ENCODE measurements at regions of chr9 and their contacts with region 1.

Region 1: DNA sequence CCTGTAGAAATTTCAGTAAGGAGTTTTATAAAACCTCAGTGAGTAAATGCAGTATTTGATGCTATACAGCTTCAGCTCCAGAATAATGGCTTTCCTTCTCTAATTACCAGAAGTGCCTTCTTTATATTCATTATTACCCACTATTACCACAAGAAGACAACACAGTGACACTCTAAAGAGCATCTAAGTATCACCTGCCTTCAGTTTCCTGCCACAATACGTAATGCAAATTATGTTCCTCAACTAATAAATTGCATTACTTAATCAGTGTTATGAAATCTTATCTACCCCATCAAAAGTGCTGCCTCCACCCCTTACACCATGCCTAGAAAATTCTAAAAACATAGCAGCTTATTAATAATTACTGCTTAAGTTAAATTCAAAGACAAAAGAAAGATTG is 91.9 kb downstream of the TRPM6 start:
- DNase-seq: no peak
- ATAC-seq: no peak

Region 2: GRCh38 chr9:73441890-73442818 is 1353.6 kb before region 1 on chr9:
- intact Hi-C with region 1: no loop called
- DNase-seq: no peak
- ATAC-seq: no peak

Region 3: GRCh38 chr9:74753650-74754049 is 42.2 kb before region 1 on chr9:
- intact Hi-C with region 1: no loop called
- DNase-seq: no peak
- ATAC-seq: no peak

Region 4: DNA sequence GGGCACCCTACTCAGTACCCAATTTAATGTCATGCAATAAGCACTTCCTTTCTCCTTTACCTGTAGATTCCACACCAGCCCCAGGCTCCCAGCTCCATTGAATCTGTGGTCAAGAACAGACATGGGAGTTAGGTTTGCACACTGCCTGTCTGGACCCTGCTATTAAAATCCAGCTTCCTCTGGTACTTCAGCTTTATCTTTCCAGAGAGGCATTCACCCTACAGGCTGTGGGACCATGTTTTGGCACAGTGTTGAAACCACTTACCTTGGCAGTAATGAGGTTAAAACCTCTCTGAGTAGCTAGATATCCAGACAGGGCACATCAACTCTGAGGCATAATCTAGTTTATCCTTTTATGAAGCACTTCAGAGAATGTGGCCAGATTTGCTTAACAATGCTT is 903.2 kb after region 1 on chr9:
- intact Hi-C with region 1: loop called (anchors 5 kb)
- DNase-seq: no peak
- ATAC-seq: no peak

Region 5: DNA sequence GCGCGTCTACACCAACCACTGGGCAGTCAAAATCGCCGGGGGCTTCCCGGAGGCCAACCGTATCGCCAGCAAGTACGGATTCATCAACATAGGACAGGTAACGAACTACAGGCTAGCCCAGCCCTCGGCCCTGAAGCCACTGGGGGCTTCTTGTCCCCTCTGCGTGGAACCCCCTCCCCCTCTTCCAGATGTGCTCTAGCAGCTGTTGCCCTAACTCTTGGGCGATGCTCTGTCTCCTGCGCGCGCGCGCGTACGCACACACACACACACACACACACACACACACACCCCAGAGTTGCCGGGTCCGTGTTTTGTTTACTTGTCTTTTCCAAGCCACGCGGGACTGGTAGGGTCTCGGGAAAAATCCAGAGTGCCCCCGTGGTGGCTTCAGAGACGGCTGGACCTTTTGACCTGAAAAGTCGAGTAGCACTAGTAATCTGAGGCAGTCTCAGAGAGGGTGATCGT is 1095.5 kb after region 1 on chr9:
- intact Hi-C with region 1: no loop called
- DNase-seq: peak; percentile 73
- ATAC-seq: peak; percentile 57